IMR-90 (cell line): ENCODE measurements at regions of chr7 and their contacts with region 1.

Region 1: DNA sequence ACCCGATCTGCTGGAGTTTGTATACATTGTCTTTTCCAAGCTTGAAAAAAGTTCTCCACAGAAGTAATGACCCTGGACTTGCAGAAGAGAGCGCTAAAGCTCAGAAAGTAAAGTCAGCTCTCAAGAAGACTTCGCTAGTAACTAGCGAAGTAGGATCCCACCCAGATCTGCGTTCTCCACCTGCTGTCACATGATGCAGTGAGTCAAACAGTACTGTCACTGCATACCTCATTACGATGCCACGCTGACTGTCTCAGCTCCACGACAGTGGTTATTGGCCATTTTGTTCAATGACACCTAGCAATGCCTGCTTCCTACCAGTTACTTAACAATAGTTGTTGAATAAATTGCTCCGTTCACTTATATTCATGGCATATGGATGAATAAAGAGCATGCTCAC is 29.7 kb upstream of the SEC61G start:
- DNase-seq: peak; percentile 96
- ATAC-seq: peak; percentile 98
- H3K4me3 ChIP-seq: no peak overlapping the region; the same call in 1 of the 2 replicates
- H3K27ac ChIP-seq: no peak overlapping the region
- H3K4me1 ChIP-seq: peaks cover 2% of the 10 kb centered on the region; the same call in 1 of the 2 replicates
- H3K27me3 ChIP-seq: no peaks in the 10 kb centered on the region
- CTCF ChIP-seq: peak; percentile 96
- POLR2A ChIP-seq: peak; percentile 46; the same call in 1 of the 2 replicates
- RAD21 ChIP-seq: peak; percentile 96

Region 2: GRCh38 chr7:54839538-54840213 is 51.0 kb after region 1 on chr7:
- CTCF ChIA-PET with region 1: interaction called, 9 read pairs
- POLR2A ChIA-PET with region 1: no interaction called
- dilution Hi-C with region 1: no loop called
- in situ Hi-C with region 1: no loop called
- intact Hi-C with region 1: loop called (anchors 1 kb)
- DNase-seq: peak; percentile 56
- ATAC-seq: peak; percentile 90
- H3K4me3 ChIP-seq: no peak overlapping the region
- H3K27ac ChIP-seq: no peak overlapping the region
- H3K4me1 ChIP-seq: peaks cover 10% of the 10 kb centered on the region
- H3K27me3 ChIP-seq: no peaks in the 10 kb centered on the region
- CTCF ChIP-seq: peak; percentile 58
- POLR2A ChIP-seq: no peak
- RAD21 ChIP-seq: peak; percentile 70

Region 3: GRCh38 chr7:55018361-55019190 is 229.9 kb after region 1 on chr7 and contains the start of gene EGFR:
- CTCF ChIA-PET with region 1: no interaction called
- POLR2A ChIA-PET with region 1: no interaction called
- dilution Hi-C with region 1: no loop called
- in situ Hi-C with region 1: loop called (anchors 10 kb)
- intact Hi-C with region 1: loop called (anchors 1 kb)
- DNase-seq: peak; percentile 80
- ATAC-seq: peak; percentile 94
- H3K4me3 ChIP-seq: peak within 1 kb of the TSS; percentile 98
- H3K27ac ChIP-seq: peak within 1 kb of the TSS; percentile 97
- H3K4me1 ChIP-seq: peaks cover 13% of the 10 kb centered on the region
- H3K27me3 ChIP-seq: no peaks in the 10 kb centered on the region
- CTCF ChIP-seq: no peak
- POLR2A ChIP-seq: peak; percentile 77
- RAD21 ChIP-seq: no peak
- total RNA-seq, gene EGFR: 60.4 and 63.9 TPM in 2 replicates

Region 4: DNA sequence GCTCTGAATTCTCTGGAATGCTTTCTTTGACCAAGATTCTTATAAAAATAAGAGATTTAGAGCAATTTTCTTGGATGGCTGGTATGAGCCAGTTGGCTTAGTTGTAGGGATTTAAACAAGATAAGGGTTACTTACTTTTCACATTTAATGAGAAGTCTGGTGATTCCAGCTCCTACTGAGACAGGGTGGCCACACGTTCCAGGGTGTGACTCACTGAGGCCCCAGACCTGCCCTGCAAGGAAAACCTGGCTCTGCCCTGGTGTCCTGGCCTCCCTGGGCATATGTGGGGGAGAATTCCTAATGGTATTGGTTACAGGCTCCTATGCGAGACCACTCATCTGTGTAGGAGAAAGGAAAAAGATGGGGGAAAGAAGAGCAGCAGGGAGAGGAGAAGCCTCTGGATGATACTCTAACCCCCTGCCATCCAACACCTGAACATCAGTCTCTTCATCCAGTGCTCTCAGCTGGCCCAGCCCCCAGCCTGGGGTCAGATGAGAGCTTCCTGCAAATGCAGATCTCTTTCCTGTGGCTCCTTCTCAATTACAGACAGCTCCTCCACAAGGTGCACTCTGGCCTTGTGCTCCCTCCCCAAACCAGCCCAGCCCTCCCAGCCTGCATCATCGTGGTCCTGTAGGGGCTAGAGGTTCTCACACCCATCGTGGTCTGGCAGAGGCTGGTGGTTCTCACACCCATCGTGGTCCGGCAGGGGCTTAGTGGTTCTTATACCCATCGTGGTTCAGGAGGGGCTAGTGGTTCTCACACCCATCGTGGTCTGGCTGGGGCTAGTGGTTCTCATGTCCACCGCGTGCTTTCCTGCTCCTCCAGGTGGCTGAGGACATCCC is 370.1 kb after region 1 on chr7:
- CTCF ChIA-PET with region 1: no interaction called
- POLR2A ChIA-PET with region 1: no interaction called
- dilution Hi-C with region 1: no loop called
- in situ Hi-C with region 1: loop called (anchors 25 kb)
- intact Hi-C with region 1: no loop called
- DNase-seq: peak; percentile 69
- ATAC-seq: peak; percentile 15; the same call in 1 of the 2 replicates
- H3K4me3 ChIP-seq: no peak overlapping the region
- H3K27ac ChIP-seq: peak overlapping the region; percentile 43
- H3K4me1 ChIP-seq: peaks cover 25% of the 10 kb centered on the region
- H3K27me3 ChIP-seq: no peaks in the 10 kb centered on the region
- CTCF ChIP-seq: no peak
- POLR2A ChIP-seq: no peak
- RAD21 ChIP-seq: no peak